ENCODE measurements at regions of chr12 and their contacts with region 1.

Region 1: DNA sequence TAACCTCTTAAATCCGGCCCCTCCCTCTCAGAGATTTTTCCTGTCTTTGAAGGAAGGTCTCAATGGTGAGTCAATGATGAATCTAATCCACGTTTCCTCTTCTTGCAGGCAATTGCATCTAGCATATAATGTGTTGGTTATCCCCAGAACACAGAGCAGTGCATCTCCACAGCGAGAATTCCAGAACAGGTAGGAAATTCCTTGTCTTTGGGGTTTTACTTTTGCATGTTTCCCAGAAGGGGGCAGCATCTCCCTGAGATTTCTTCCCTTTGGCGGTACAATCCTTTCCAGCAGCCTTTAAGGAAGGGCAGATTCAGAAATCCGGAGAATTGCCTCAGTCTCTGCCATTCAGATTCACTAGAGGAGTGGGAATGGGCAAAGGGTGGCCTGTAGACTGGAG is 128.0 kb downstream of the KCNA5 start:
- DNase-seq: no peak
- H3K4me3 ChIP-seq: no peak overlapping the region
- H3K27ac ChIP-seq: no peak overlapping the region
- H3K4me1 ChIP-seq: no peaks in the 10 kb centered on the region
- H3K27me3 ChIP-seq: peaks cover 0 to 7% (median 0%) of the 10 kb centered on the region in 3 donors
- CTCF ChIP-seq: peak in 3 of 4 experiments; percentile 40 to 55 (median 48)
- EP300 ChIP-seq: no peak
- POLR2A ChIP-seq: no peak

Region 2: DNA sequence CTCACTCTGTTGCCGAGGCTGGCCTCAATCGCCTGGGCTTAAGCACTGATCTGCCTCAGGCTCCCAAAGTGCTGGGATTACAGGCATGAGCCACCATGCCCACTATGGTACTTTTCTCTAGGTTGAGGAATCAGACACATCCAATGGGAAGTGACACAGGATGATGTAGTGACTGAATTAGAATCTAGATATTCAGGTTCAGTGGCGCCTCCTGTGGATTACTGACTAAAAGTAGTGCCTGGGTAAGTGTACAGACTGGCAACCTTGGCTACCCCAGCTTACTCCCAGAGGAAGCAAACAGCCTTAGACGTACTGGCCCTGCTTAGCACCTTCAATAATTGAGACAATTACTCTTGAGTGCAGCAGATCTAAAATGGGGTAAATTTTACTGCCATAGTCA is 428.7 kb before region 1 on chr12:
- intact Hi-C with region 1: no loop called
- DNase-seq: no peak
- H3K4me3 ChIP-seq: no peak overlapping the region
- H3K27ac ChIP-seq: no peak overlapping the region
- H3K4me1 ChIP-seq: no peaks in the 10 kb centered on the region
- H3K27me3 ChIP-seq: no peaks in the 10 kb centered on the region
- CTCF ChIP-seq: no peak
- EP300 ChIP-seq: no peak
- POLR2A ChIP-seq: no peak

Region 3: DNA sequence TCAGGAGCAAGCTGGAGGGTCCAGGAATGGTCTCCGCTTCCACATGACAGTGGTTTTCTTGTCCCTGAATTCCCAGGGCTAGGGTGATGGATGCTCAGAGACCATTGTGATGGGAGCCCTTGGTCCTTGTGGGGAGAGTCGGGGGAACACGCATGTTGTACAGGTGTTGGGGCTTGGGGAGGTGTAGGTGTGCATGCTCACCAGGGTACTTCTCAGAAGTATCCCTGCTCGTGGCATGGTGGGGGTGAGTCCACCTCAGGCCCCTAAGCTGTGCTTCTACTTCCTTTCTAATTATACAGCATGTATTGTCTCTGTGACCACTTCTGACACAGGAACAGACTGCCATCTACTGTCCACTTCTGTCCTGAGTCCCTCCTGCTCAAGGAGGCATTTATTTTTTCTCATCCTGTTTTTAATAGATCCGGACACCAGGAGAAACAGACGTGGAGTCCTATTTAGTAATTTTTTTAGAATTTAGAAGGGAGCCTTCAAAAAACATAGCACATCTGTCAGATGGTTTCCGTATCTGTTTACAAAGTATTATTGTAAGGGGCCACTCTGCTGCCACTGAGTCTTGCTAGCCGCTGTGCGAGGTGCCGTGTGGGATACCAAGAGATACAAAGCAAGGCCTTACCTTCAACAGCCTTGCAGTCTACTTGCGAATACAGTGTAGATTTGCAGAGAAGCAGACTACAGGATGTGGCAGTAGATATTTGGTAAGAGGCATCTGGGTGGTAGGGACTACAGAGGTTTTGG is 270.7 kb after region 1 on chr12:
- intact Hi-C with region 1: loop called (anchors 5 kb)
- DNase-seq: no peak
- H3K4me3 ChIP-seq: no peak overlapping the region
- H3K27ac ChIP-seq: no peak overlapping the region
- H3K4me1 ChIP-seq: no peaks in the 10 kb centered on the region
- H3K27me3 ChIP-seq: peaks cover 0 to 25% (median 2%) of the 10 kb centered on the region in 3 donors
- CTCF ChIP-seq: peak; percentile 6 to 52 (median 48)
- EP300 ChIP-seq: no peak
- POLR2A ChIP-seq: no peak

Measured in sigmoid colon (tissue), 7 donors.